ENCODE measurements at regions of chr2 and their contacts with region 1.

Region 1: DNA sequence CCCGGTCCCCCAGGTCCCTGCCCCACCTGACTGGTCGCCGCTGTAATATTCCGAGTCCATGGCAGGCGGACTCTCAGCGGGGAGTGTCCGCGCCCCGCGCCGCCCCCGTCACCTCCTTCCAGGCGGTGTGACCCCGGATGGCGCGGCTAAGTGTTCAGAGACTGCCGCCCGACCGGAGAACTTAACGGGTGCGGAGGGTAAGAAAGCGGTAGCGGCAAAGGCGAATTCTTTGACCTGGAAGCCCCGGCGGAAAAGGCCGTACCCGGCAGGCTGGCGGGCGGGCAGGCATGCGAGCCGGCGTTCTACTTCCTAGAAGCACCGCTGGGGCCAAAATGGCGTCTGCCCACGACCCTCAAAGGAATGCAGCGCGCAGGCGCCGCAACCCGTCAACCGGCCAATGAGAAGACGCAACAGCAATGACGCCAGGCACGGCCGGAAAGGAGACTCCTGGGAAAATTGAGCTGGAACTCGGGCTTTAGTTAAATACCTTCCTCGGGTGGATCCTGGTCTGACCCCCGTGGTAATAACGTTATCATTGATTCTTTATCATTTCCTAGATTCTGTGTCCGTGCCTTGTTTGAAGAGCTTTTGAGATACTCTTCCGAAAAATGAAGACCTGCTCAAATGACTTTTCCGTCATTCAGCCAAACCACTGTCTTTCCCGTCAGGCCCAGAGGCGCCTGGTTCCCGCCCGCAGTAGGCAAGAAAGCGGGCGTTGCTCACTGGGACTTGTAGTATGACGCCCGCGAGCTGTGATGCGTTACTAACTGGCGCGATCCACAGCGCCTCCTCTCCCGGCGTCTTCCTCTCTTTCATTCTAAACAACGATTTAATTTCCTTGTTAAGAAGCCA is at the start of gene IWS1:
- DNase-seq: peak; percentile 85 to 95 (median 92)
- ATAC-seq: peak; percentile 94
- H3K4me3 ChIP-seq: peak within 1 kb of the TSS; percentile 87
- H3K4me3 Mint-ChIP-seq: peak within 1 kb of the TSS; percentile 81 to 99 (median 96)
- H3K27ac ChIP-seq: peak within 1 kb of the TSS; percentile 82
- H3K27ac Mint-ChIP-seq: peak within 1 kb of the TSS; percentile 87 to 99 (median 99)
- H3K4me1 ChIP-seq: peaks cover 6 to 9% of the 10 kb centered on the region in 2 donors
- H3K4me1 Mint-ChIP-seq: peaks cover 14 to 49% (median 43%) of the 10 kb centered on the region in 7 donors
- H3K27me3 ChIP-seq: no peaks in the 10 kb centered on the region
- H3K27me3 Mint-ChIP-seq: peaks cover 0 to 9% (median 0%) of the 10 kb centered on the region in 5 donors
- total RNA-seq, gene IWS1: 24.0 to 57.5 (median 43.4) TPM

Region 2: GRCh38 chr2:126496493-126496892 is 1029.9 kb before region 1 on chr2:
- CTCF ChIA-PET with region 1: no interaction called
- POLR2A ChIA-PET with region 1: no interaction called
- intact Hi-C with region 1: no loop called
- DNase-seq: no peak
- ATAC-seq: no peak
- H3K4me3 ChIP-seq: no peak overlapping the region
- H3K4me3 Mint-ChIP-seq: no peak overlapping the region
- H3K27ac ChIP-seq: no peak overlapping the region
- H3K27ac Mint-ChIP-seq: no peak overlapping the region
- H3K4me1 ChIP-seq: no peaks in the 10 kb centered on the region
- H3K4me1 Mint-ChIP-seq: no peaks in the 10 kb centered on the region
- H3K27me3 ChIP-seq: no peaks in the 10 kb centered on the region
- H3K27me3 Mint-ChIP-seq: peaks cover 2 to 33% (median 26%) of the 10 kb centered on the region in 5 donors

Region 3: DNA sequence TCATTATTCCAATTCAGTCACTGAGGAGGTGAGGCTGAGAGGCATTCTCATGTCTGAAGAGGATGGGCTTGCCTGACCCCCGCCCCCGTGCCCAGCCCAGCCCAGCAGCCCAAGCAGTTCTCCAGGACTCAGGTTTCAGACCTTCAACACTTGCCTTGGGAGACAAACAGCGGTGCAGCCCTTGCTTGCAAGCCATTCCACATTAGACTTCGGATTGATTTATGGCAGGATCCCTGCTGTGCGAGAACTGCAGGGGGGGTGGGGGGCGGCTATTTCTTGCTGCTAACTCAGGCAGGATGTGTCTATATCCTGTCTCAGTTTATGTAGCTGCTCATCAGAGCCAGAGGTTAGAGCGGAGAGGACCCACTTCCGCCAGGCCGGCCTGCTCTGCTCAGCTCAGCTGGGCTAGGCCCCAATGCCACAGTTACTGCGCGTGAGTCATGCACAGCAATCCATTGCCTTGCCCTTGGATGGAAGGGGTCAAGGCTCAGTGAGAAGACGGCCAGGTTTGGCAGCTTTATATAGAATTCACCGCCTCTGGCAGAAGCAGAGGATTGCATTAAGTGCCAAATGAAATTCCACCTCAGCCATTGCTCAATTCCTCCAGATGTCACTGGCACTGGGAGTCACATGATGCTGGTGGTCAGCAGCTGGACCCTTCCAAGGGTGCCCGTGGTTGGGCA is 868.6 kb before region 1 on chr2:
- CTCF ChIA-PET with region 1: no interaction called
- POLR2A ChIA-PET with region 1: no interaction called
- intact Hi-C with region 1: loop called (anchors 5 to 10 kb)
- DNase-seq: peak; percentile 40 to 79 (median 73)
- ATAC-seq: peak; percentile 72
- H3K4me3 ChIP-seq: peak overlapping the region; percentile 99
- H3K4me3 Mint-ChIP-seq: peak overlapping the region; percentile 88 to 100 (median 96)
- H3K27ac ChIP-seq: peak overlapping the region; percentile 98
- H3K27ac Mint-ChIP-seq: peak overlapping the region; percentile 93 to 100 (median 98)
- H3K4me1 ChIP-seq: peaks cover 41 to 59% of the 10 kb centered on the region in 2 donors
- H3K4me1 Mint-ChIP-seq: peaks cover 50 to 78% (median 63%) of the 10 kb centered on the region in 7 donors
- H3K27me3 ChIP-seq: no peaks in the 10 kb centered on the region
- H3K27me3 Mint-ChIP-seq: no peaks in the 10 kb centered on the region

Region 4: DNA sequence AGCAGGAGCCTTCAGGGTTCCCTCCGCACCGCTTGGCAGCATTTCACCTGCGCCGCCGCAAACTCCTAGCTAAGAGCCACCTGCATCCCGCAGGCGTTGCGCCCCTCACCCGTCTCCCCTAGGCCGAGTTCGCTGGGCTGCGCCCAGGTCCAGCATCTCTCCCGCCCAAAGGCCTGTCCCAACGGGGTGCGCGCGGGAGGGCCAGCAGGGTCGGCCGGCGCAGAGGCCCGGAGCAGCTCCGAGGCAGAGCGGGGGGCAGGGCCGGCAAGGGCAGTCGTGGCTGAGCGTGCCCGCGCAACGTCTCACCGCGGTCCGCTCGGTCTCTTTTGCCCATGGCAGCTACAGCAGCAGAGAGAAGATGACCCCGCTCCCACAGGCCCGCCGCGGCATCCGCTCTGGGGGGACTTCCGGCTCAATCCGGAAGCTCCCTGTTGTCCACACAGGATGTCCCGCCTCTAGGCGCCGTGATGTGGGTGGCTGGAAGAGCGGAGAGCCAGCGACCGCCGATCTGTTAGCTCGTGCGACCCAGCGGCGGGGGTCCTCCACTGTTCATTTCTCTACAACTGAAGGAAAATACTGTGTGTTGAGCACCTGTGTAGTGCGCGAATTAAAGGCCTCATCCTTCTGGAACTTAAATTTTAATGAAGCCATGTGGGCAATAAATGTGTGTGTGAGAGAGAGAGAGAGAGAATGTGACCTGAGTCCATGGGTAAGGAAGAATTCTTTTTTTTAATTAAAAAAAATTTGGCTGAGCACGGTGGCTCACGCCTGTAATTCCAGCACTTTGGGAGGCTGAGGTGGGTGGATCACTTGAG is 232.4 kb before region 1 on chr2 and contains the start of gene ERCC3:
- CTCF ChIA-PET with region 1: no interaction called
- POLR2A ChIA-PET with region 1: no interaction called
- intact Hi-C with region 1: loop called (anchors 1 to 2 kb)
- DNase-seq: peak; percentile 54 to 81 (median 72)
- ATAC-seq: peak; percentile 93
- H3K4me3 ChIP-seq: peak within 1 kb of the TSS; percentile 87
- H3K4me3 Mint-ChIP-seq: peak within 1 kb of the TSS; percentile 92 to 99 (median 98)
- H3K27ac ChIP-seq: peak within 1 kb of the TSS; percentile 86
- H3K27ac Mint-ChIP-seq: peak within 1 kb of the TSS; percentile 77 to 97 (median 95)
- H3K4me1 ChIP-seq: peaks cover 8 to 12% of the 10 kb centered on the region in 2 donors
- H3K4me1 Mint-ChIP-seq: peaks cover 18 to 49% (median 37%) of the 10 kb centered on the region in 7 donors
- H3K27me3 ChIP-seq: no peaks in the 10 kb centered on the region
- H3K27me3 Mint-ChIP-seq: no peaks in the 10 kb centered on the region
- total RNA-seq, gene ERCC3: 43.4 to 71.5 (median 56.8) TPM

Region 5: DNA sequence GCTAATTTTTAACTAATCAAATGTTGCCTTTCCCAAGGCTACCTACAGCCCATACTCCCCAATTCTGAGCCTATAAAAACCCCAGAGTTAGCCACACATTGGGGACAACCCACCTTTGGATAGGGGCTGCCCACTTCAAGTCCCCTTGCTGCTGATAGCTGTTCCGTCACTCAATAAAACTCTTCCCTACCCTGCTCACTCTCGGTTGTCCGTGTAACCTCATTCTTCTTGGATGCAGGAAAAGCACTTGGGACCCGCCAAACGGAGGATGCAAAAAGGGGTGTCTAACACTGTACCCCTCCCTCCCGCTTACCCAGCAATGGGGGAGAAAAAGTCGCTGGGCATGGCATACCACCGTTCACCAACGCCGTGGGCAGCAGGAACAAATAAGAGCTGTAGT is 12.3 kb before region 1 on chr2:
- CTCF ChIA-PET with region 1: no interaction called
- POLR2A ChIA-PET with region 1: interaction called, 14 read pairs
- intact Hi-C with region 1: no loop called
- DNase-seq: no peak
- ATAC-seq: no peak
- H3K4me3 ChIP-seq: no peak overlapping the region
- H3K4me3 Mint-ChIP-seq: peak overlapping the region in 1 of 10 donors; percentile 32
- H3K27ac ChIP-seq: no peak overlapping the region
- H3K27ac Mint-ChIP-seq: peak overlapping the region in 4 of 9 donors; percentile 12 to 46 (median 29)
- H3K4me1 ChIP-seq: peaks cover 6 to 29% of the 10 kb centered on the region in 2 donors
- H3K4me1 Mint-ChIP-seq: peaks cover 46 to 92% (median 89%) of the 10 kb centered on the region in 7 donors
- H3K27me3 ChIP-seq: no peaks in the 10 kb centered on the region
- H3K27me3 Mint-ChIP-seq: no peaks in the 10 kb centered on the region

Region 6: DNA sequence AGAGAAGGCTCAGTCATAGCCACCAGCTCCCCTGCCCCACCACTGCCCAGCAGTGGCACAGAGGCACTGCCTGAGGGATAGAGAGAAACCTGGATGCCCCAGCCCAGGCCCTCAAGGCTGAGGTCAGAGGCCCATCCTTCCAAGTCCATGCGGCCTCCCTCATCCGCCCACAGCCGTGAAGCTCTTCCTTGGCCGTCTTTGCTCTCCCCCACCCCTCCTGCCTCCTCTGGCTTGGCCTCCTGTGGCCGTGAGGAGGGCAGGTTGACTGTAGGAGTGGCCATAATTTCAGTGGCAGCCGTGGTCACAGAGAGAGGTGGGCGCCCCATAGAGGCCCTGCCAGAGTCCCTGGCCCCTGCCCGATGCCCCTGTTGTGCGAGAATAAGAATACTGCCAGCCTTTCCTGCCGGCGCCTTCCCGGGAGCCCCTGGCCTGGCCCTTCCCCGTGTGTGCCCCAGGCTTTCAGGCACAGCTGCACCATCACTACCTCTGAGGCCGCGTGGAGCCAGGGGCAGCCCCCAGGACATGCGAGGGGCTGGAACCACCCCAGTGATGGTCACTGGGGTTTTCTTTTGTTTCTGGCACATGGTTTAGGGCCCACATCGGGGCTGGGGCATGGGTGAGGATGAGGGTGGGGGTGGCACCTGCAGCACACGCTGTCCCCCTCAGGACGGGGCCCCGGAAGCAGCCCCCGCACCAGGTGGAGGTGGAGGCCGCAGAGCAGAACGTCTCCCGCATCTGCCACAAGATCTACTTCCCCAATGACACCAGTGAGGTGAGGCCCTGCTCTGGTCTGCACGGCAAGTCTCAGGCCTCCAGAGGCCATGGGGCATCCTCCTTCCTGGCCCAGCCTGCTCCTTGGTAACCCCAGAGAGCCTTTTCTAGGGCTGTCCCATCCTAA is 106.5 kb after region 1 on chr2:
- CTCF ChIA-PET with region 1: no interaction called
- POLR2A ChIA-PET with region 1: no interaction called
- intact Hi-C with region 1: no loop called
- DNase-seq: no peak
- ATAC-seq: peak; percentile 20
- H3K4me3 ChIP-seq: no peak overlapping the region
- H3K4me3 Mint-ChIP-seq: peak overlapping the region in 8 of 10 donors; percentile 25 to 61 (median 42)
- H3K27ac ChIP-seq: peak overlapping the region; percentile 40
- H3K27ac Mint-ChIP-seq: peak overlapping the region in 8 of 9 donors; percentile 53 to 87 (median 78)
- H3K4me1 ChIP-seq: peaks cover 0 to 60% of the 10 kb centered on the region in 2 donors
- H3K4me1 Mint-ChIP-seq: peaks cover 4 to 58% (median 29%) of the 10 kb centered on the region in 7 donors
- H3K27me3 ChIP-seq: no peaks in the 10 kb centered on the region
- H3K27me3 Mint-ChIP-seq: no peaks in the 10 kb centered on the region

Region 7: DNA sequence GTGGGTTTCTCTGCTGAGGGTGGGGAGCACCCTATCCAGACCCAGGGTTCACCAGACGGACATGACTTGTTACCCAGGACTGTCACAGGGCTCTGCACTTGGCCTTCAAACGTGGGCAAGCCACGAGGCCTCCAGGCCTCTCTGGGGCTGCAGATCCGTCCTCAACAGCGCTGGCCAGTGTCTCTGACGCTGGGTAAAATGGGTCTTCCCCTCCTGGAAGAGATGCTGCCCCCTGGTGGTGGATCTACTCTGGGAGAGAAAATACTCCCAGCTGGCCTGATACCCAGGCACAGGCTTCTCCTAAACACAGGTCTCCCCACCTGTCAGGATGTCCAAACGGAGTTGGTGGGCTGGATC is 123.3 kb after region 1 on chr2:
- CTCF ChIA-PET with region 1: no interaction called
- POLR2A ChIA-PET with region 1: interaction called, 4 read pairs
- intact Hi-C with region 1: loop called (anchors 1 to 2 kb)
- DNase-seq: peak; percentile 60 to 91 (median 79)
- ATAC-seq: peak; percentile 88
- H3K4me3 ChIP-seq: peak overlapping the region; percentile 15
- H3K4me3 Mint-ChIP-seq: peak overlapping the region in 8 of 10 donors; percentile 47 to 78 (median 72)
- H3K27ac ChIP-seq: peak overlapping the region; percentile 18
- H3K27ac Mint-ChIP-seq: peak overlapping the region in 7 of 9 donors; percentile 79 to 92 (median 88)
- H3K4me1 ChIP-seq: peaks cover 0 to 9% of the 10 kb centered on the region in 2 donors
- H3K4me1 Mint-ChIP-seq: peaks cover 10 to 38% (median 29%) of the 10 kb centered on the region in 7 donors
- H3K27me3 ChIP-seq: no peaks in the 10 kb centered on the region
- H3K27me3 Mint-ChIP-seq: no peaks in the 10 kb centered on the region

Region 8: DNA sequence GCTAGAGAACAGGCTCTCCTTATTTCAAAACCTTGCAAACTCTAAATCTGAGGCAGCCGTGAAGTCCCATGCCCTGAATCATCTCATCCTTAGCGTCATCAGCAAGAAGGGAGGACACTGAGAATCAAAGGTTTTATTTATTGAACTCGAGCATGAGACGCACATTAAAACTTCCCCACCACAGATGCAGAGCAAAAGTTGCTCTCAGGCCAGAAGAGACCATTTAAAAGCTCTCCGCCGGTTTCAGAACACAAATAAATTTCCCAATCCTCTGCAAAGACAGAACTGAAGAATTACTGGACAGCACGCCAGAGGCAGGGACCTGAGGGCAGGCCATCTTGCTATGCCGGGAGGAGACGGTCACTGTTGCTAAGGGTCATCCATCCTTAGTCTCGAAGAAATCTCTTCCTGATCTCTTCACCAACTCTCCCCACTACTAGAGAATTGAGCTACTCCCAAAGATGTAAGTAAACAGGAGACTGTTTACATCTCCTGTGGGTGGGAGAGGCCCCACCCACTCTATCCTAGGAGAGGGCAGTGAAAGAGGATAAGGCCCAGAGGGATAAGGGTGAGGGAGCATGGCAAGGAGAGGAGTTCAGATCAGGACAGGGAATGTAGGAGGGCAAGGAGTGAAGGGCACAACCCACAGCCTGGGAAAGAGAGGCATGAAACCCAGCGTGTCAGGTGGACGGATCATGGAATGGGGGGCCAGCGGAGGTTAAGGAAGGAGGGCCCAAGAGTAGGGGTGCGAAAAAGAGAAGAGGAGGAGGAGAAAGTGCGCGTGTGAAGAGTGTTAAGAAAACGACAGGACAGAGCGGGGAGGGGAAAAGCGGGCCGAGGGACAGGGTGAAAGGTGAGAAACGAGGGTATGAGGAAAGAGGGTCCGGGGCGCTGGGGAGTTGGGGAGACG is 358.3 kb after region 1 on chr2:
- CTCF ChIA-PET with region 1: no interaction called
- POLR2A ChIA-PET with region 1: no interaction called
- intact Hi-C with region 1: loop called (anchors 10 kb)
- DNase-seq: peak in 1 of 9 donors; percentile 7
- ATAC-seq: no peak
- H3K4me3 ChIP-seq: peak overlapping the region; percentile 43
- H3K4me3 Mint-ChIP-seq: peak overlapping the region; percentile 78 to 100 (median 92)
- H3K27ac ChIP-seq: peak overlapping the region; percentile 55
- H3K27ac Mint-ChIP-seq: peak overlapping the region; percentile 75 to 94 (median 89)
- H3K4me1 ChIP-seq: peaks cover 15 to 24% of the 10 kb centered on the region in 2 donors
- H3K4me1 Mint-ChIP-seq: peaks cover 36 to 73% (median 66%) of the 10 kb centered on the region in 7 donors
- H3K27me3 ChIP-seq: no peaks in the 10 kb centered on the region
- H3K27me3 Mint-ChIP-seq: no peaks in the 10 kb centered on the region

Measured in naive thymus-derived CD4-positive, alpha-beta T cell (primary cell).